ENCODE measurements at regions of chr12 and their contacts with region 1.

Region 1: GRCh38 chr12:122203301-122204166 is at the start of gene B3GNT4:
- DNase-seq: peak in 1 of 2 experiments; percentile 87
- H3K4me3 ChIP-seq: peak within 1 kb of the TSS; percentile 29 to 74 (median 54)
- H3K27ac ChIP-seq: no peak within 1 kb of the TSS
- H3K4me1 ChIP-seq: peaks cover 0 to 10% (median 3%) of the 10 kb centered on the region in 4 experiments; a peak in 5 of 7 replicates
- H3K27me3 ChIP-seq: peaks cover 9 to 44% (median 27%) of the 10 kb centered on the region in 4 experiments; a peak in 6 of 7 replicates
- CTCF ChIP-seq: no peak
- EP300 ChIP-seq: peak in 1 of 2 experiments; percentile 42; a peak in 1 of 3 replicates
- POLR2A ChIP-seq: no peak
- RAD21 ChIP-seq: no peak
- total RNA-seq, gene B3GNT4: 1.4 and 1.9 TPM in 2 replicates

Region 2: GRCh38 chr12:122215771-122216170 is 12.2 kb after region 1 on chr12:
- CTCF ChIA-PET with region 1: interaction called, 15 read pairs
- POLR2A ChIA-PET with region 1: interaction called, 230 read pairs
- DNase-seq: no peak
- H3K4me3 ChIP-seq: no peak overlapping the region
- H3K27ac ChIP-seq: no peak overlapping the region
- H3K4me1 ChIP-seq: no peaks in the 10 kb centered on the region
- H3K27me3 ChIP-seq: no peaks in the 10 kb centered on the region
- CTCF ChIP-seq: no peak
- EP300 ChIP-seq: no peak
- POLR2A ChIP-seq: no peak
- RAD21 ChIP-seq: no peak

Region 3: DNA sequence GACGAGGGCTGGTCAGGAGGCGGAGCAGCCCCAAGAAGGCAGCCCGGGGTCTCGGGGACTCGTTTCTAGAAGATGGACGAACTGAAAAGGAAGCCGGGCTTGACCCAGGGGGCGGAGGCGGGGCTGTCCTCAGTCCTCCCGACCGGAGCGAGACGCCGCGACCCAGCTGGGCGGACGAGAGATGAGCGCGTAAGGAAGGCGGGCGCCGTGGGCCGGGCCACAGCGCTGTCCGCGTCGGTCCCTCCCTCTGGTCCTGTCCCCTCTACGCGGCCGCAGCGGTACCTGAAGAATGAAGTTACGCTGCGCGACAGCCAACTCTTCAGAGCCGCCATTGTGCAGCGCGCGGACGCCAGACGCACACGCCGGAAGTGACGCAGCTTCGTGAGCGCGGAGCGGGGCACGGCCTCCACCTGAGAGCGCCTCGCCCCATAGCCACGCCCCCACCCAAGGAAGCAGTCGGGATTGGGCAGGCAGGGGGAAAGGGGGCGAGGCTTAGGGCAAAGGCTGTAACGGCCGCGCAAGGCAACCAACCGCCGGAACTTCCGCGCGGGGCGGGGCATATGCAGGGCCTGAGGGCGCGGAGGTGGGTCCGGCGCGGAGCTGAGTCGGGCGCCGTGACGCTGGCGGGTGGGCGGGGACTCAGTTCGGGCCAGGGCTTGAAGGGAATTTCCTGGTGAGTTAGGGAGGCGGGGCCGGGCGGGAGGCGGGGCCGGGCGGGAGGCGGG is 22.3 kb after region 1 on chr12 and contains the start of gene DIABLO:
- CTCF ChIA-PET with region 1: interaction called, 8 read pairs
- POLR2A ChIA-PET with region 1: interaction called, 230 read pairs
- DNase-seq: peak; percentile 97 to 99
- H3K4me3 ChIP-seq: peak within 1 kb of the TSS; percentile 83 to 100 (median 96)
- H3K27ac ChIP-seq: peak within 1 kb of the TSS; percentile 91
- H3K4me1 ChIP-seq: peaks cover 3 to 14% (median 10%) of the 10 kb centered on the region in 4 experiments
- H3K27me3 ChIP-seq: no peaks in the 10 kb centered on the region; a peak in 2 of 7 replicates
- CTCF ChIP-seq: no peak
- EP300 ChIP-seq: no peak
- POLR2A ChIP-seq: peak; percentile 96 to 97
- RAD21 ChIP-seq: no peak
- total RNA-seq, gene DIABLO: 68.3 and 71.5 TPM in 2 replicates

Region 4: GRCh38 chr12:122366685-122367475 is 163.3 kb after region 1 on chr12:
- CTCF ChIA-PET with region 1: no interaction called
- POLR2A ChIA-PET with region 1: no interaction called
- DNase-seq: peak in 1 of 2 experiments; percentile 19
- H3K4me3 ChIP-seq: no peak overlapping the region
- H3K27ac ChIP-seq: peak overlapping the region; percentile 50; the same call in 1 of the 2 replicates
- H3K4me1 ChIP-seq: no peaks in the 10 kb centered on the region; a peak in 1 of 7 replicates
- H3K27me3 ChIP-seq: no peaks in the 10 kb centered on the region
- CTCF ChIP-seq: no peak
- EP300 ChIP-seq: no peak
- POLR2A ChIP-seq: no peak
- RAD21 ChIP-seq: no peak

Measured in H1 (cell line).